ENCODE measurements at regions of chr1 and their contacts with region 1.

Region 1: GRCh38 chr1:210448297-210448892 is 119.7 kb downstream of the HHAT start:
- DNase-seq: no peak
- H3K4me3 Mint-ChIP-seq: no peak overlapping the region
- H3K27ac Mint-ChIP-seq: no peak overlapping the region
- H3K4me1 Mint-ChIP-seq: peaks cover 21% of the 10 kb centered on the region
- H3K27me3 Mint-ChIP-seq: peaks cover 3% of the 10 kb centered on the region

Region 2: DNA sequence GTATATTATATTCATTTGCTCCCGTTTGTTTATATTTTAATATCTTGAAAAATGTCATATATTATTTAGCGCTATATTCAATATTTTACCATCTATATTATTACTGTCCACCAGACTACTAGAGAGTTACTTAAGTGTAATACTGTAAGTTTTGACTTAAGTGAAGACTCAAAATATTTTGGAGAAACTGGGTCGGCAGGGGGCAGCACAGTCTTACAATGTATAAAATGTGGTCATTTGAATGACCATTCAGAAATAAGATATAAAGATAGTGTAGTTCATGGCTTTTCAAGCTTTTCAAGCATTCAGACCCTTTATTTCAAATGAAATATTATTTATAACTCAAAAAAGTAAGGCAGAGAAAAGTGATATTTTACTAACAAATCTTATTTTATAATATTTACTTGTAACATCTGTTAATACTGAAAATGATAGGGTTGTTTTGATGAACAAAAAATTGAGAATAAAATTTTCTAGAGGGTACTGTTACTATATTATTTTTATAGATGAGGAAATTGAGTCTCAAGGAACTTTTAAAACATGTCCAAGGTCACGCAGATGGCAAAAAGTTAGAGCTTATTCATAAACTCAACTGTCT is 304.8 kb before region 1 on chr1:
- intact Hi-C with region 1: loop called (anchors 1 kb)
- DNase-seq: no peak
- H3K4me3 Mint-ChIP-seq: no peak overlapping the region
- H3K27ac Mint-ChIP-seq: no peak overlapping the region
- H3K4me1 Mint-ChIP-seq: no peaks in the 10 kb centered on the region
- H3K27me3 Mint-ChIP-seq: no peaks in the 10 kb centered on the region

Region 3: DNA sequence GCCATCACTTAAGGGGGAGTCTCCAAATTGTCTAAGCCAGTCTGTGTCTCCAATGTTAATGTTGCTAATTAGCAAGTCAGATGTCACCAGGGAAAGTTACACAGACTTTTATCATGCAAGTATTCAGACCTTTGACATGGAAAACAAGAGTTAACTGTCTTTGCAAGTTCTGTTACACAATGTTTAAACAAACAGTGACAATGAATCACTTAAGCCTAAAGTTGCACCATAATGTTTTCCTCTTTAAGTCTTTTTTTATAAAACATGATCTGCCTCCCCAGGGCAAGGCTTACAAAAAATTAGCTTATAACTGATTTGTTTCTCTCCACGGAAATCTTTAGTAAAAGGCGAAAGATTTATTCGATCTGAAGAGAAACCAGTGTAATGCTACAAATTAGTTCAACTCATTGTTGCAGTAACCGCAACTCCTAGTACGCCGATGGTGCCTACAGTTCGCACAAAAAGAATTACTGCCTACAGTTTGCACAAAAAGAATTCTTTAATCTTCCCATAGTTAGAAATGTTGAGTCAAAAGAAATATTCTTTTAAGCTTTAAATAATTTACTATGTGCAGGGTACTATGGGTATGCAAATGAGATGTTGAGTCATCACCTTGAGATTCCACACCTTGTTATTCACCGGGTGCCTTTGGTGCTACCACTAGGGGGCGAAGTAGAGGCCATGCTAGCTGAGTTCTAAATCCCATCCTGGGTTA is 74.4 kb before region 1 on chr1:
- intact Hi-C with region 1: loop called (anchors 1 kb)
- DNase-seq: peak; percentile 57
- H3K4me3 Mint-ChIP-seq: no peak overlapping the region
- H3K27ac Mint-ChIP-seq: peak overlapping the region; percentile 62
- H3K4me1 Mint-ChIP-seq: peaks cover 19% of the 10 kb centered on the region
- H3K27me3 Mint-ChIP-seq: peaks cover 5% of the 10 kb centered on the region

Region 4: GRCh38 chr1:210584439-210585113 is 136.2 kb after region 1 on chr1:
- intact Hi-C with region 1: loop called (anchors 1 kb)
- DNase-seq: peak; percentile 37
- H3K4me3 Mint-ChIP-seq: no peak overlapping the region
- H3K27ac Mint-ChIP-seq: no peak overlapping the region
- H3K4me1 Mint-ChIP-seq: peaks cover 9% of the 10 kb centered on the region
- H3K27me3 Mint-ChIP-seq: no peaks in the 10 kb centered on the region

Region 5: DNA sequence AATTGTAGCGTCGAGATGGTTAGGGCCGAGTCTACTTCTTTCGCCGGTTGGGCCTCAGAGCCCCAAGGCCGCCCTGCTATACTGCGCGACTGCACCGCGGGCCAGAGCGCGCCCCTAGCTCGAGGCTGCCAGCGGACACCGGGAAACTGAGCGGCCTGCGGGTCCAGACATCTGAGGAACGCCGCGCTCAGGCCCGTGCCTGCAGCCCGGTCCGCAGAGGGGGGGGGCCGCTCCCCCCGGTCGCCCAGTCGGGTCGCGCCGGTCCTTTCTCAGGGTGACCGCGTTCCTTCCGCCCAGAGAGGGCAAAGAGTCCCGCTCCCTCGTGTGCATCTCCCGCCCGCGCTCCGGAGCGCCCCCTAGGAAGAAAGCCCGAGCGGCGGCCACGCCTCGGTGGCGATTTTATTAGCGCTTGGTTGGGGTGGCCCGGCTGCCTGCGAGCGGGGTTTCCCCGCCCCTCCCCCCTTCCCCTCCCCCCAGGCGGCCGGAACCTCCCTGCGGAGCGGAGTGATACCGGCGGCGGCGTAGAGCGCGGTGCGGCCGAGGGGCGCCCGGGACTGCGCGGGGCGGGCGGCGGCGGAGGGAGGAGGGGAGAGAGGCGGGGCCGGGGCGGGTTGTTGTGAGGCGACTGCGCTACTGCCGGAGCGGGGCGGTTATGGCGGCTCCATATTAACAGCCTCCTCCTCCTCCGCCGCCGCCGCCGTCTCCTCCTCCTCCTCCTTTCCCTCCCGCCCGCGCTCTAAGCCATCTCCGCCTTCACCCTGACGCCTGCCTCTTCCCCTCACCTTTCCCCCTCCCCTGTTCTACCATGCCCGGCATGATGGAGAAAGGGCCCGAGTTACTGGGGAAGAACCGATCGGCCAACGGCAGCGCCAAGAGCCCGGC is 810.6 kb after region 1 on chr1 and contains the start of gene RCOR3:
- intact Hi-C with region 1: loop called (anchors 2 kb)
- DNase-seq: peak; percentile 85
- H3K4me3 Mint-ChIP-seq: peak within 1 kb of the TSS; percentile 90
- H3K27ac Mint-ChIP-seq: peak within 1 kb of the TSS; percentile 90
- H3K4me1 Mint-ChIP-seq: peaks cover 20% of the 10 kb centered on the region
- H3K27me3 Mint-ChIP-seq: peaks cover 4% of the 10 kb centered on the region
- total RNA-seq, gene RCOR3: 40.5 and 41.0 TPM in 2 replicates

Region 6: DNA sequence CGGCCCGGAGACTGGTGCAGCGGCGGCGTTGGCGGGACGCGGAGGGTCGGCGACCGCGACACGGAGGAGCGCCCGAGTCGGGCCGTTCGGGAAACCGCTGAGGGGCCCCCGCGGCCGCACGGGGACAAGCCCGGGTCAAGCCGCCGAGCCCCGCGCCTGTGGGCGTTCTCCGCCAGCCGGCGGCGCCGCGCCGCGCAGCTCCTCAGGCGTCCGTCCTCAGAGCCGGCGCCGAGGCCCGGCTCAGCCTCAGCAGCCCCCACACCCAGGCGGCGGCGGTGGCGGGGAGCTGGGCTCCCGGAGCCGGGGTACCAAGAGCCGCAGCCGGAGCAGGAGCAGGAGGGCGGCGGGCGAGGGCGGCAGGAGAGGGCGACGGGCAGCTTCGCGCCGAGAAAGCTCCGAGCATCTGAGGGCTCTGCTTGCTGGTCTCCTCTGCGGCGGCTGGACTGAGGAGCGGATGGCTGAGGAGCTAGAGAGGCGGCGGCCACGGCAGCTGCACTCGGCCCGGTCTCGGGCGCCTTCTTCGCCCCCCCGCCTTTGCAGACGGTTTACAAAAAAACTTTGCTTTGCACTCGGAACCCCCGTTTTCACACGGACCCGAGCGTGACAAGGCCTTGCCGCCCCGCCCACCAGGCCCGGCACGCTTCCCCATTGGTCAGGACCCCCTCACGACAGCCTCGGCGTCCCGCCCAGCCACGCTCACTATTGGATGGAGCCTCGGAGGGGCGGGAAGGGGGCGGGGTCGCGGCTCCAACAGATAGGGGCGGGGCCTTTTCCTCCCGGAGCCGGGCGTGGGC is 1130.4 kb after region 1 on chr1 and contains the start of gene SLC30A1:
- intact Hi-C with region 1: loop called (anchors 10 kb)
- DNase-seq: peak; percentile 99
- H3K4me3 Mint-ChIP-seq: peak within 1 kb of the TSS; percentile 94
- H3K27ac Mint-ChIP-seq: peak within 1 kb of the TSS; percentile 88
- H3K4me1 Mint-ChIP-seq: peaks cover 42% of the 10 kb centered on the region
- H3K27me3 Mint-ChIP-seq: peaks cover under 1% of the 10 kb centered on the region
- total RNA-seq, gene SLC30A1: 10.6 and 12.0 TPM in 2 replicates

Measured in activated T-helper 1 cell treated with anti-CD3 and anti-CD28 coated beads, Interleukin-12 subunit alpha, Interleukin-12 subunit beta, Interleukin-2, Interleukin-4 antibody, amounts not matched to agents 30 ng/mL and 10 ng/mL and 1 ng/mL, durations not matched to agents 14 hours and 24 hours and 36 hours (primary cell).